SK-N-SH (cell line): ENCODE measurements at regions of chr5 and their contacts with region 1.

Region 1: DNA sequence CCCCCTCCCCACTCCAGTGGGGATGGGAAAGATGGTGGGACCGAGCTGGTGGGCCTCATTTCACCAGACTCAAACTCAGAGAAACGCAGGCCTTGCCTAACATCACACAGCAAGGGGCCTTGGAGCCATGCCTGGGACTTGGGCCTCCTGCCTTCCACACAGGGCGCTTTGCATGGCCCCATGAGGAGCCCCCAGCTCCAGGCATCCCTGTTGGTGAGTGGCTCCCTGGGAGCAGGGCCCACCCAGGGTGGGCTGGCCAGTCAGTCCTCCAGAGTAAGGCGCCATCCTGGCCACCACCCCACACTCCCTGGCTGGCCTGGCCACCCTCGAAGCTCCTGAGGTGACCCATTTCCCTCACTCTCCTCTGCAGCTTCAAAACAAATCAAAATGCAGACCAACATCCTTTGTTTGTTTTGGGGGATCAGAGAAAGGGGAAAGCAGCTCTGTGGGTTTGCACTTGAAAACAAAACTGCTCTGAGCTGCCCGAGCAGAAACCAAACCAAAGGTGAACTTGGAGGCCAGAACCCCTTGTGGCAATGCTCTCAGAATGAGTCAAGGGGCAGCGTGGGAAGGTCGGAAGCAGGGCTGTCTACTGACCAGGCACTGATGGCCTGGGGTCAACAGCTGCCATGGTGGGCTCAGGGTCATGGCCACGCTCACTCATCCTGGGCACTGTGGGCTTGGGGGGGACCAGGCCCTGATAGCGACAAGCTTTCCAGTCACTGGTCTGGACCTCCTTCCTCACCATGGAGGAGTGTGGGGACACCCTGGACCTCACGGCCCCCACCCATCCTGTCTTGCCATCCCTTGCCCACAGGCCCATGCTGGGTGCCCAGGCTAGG is 37.0 kb upstream of the VDAC1 start:
- DNase-seq: no peak
- H3K4me3 ChIP-seq: no peak overlapping the region
- H3K27ac ChIP-seq: no peak overlapping the region
- H3K4me1 ChIP-seq: peaks cover 0 to 3% of the 10 kb centered on the region in 2 experiments; a peak in 1 of 4 replicates
- H3K27me3 ChIP-seq: no peaks in the 10 kb centered on the region
- CTCF ChIP-seq: no peak
- EP300 ChIP-seq: no peak
- RAD21 ChIP-seq: no peak

Region 2: GRCh38 chr5:134026521-134027268 is 15.1 kb before region 1 on chr5:
- CTCF ChIA-PET with region 1: interaction called, 43 read pairs
- POLR2A ChIA-PET with region 1: no interaction called
- DNase-seq: peak; percentile 80
- H3K4me3 ChIP-seq: no peak overlapping the region
- H3K27ac ChIP-seq: no peak overlapping the region
- H3K4me1 ChIP-seq: no peaks in the 10 kb centered on the region
- H3K27me3 ChIP-seq: no peaks in the 10 kb centered on the region
- CTCF ChIP-seq: peak; percentile 58
- EP300 ChIP-seq: no peak
- RAD21 ChIP-seq: peak; percentile 64

Region 3: DNA sequence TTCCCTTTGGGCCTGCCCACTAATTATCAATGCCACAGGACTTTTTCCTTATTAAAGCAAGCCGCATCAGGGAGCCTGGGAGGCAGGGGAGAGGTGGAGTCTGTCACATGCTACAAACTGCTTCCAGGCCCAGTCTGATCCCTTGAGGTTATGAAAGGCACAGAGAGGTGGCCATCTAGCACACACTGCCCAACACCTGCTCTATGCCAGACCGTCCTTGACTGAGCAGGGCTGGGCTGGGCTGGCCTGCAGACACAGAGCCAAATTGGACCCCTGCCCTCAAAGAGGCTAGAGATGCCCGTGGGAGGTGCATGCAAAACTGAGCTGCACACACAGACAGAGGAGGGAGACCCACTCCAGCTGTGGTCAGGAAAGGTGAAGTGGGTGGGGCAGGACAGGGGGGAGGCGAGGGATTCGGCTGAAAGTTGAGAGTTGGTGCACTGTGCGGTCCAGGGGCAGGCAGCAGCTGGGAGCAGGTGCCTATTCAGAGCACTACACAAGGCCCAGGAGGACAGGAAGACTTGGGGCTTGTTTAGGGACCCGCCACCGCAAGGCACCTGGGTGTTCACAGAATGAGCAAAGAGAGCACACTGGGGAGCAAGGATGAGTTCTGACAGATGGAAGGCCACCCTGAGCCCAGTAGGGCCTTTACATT is 36.3 kb after region 1 on chr5:
- CTCF ChIA-PET with region 1: interaction called, 25 read pairs
- POLR2A ChIA-PET with region 1: no interaction called
- DNase-seq: no peak
- H3K4me3 ChIP-seq: no peak overlapping the region
- H3K27ac ChIP-seq: no peak overlapping the region
- H3K4me1 ChIP-seq: peaks cover 0 to 4% of the 10 kb centered on the region in 2 experiments; a peak in 1 of 4 replicates
- H3K27me3 ChIP-seq: no peaks in the 10 kb centered on the region
- CTCF ChIP-seq: no peak
- EP300 ChIP-seq: no peak
- RAD21 ChIP-seq: no peak

Region 4: DNA sequence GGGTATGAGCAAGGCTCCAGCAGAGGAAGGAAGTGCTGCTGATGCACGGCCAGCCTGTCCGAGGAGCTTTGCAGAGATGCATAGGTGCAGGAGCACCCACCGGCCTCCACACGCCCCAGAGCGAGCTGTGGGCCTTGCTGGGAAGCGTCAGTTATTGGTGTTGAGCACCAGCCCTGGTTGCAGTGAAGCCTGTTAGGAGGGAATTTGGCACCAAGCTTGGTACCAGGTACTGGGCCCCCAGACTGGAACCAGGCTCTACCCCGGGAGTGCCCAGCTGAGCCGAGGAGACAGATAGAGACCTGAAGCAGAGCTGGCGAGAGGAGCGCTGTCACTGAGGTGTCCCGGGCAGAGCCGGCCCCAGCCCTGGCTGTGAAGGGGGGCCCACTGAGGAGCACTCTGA is 77.9 kb after region 1 on chr5:
- CTCF ChIA-PET with region 1: interaction called, 124 read pairs
- POLR2A ChIA-PET with region 1: interaction called, 4 read pairs
- DNase-seq: no peak
- H3K4me3 ChIP-seq: no peak overlapping the region
- H3K27ac ChIP-seq: no peak overlapping the region; a peak in 1 of 4 replicates
- H3K4me1 ChIP-seq: peaks cover 2 to 55% of the 10 kb centered on the region in 2 experiments; a peak in 3 of 4 replicates
- H3K27me3 ChIP-seq: no peaks in the 10 kb centered on the region
- CTCF ChIP-seq: no peak
- EP300 ChIP-seq: no peak
- RAD21 ChIP-seq: no peak

Region 5: DNA sequence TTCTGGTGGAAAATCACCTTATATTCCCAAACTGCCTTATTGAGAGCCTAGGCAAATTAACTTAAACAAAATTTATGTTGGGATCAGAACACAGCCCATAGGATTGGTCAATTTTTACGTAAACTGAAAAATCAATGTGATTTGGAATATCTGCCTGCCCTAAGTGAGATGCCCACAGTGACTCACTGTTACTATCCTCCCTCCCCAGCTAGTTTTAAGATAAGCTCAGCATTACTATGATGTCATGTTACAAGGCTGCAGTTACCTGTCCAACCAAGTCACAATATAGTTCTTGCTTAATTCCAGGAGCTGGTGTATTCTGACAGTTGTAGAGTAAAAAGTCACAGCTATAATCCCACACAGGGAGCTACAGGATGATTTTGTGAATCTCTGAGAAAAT is 111.9 kb after region 1 on chr5:
- CTCF ChIA-PET with region 1: interaction called, 673 read pairs
- POLR2A ChIA-PET with region 1: no interaction called
- DNase-seq: no peak
- H3K4me3 ChIP-seq: no peak overlapping the region
- H3K27ac ChIP-seq: no peak overlapping the region
- H3K4me1 ChIP-seq: no peaks in the 10 kb centered on the region; a peak in 1 of 4 replicates
- H3K27me3 ChIP-seq: no peaks in the 10 kb centered on the region
- CTCF ChIP-seq: no peak
- EP300 ChIP-seq: no peak
- RAD21 ChIP-seq: no peak

Region 6: GRCh38 chr5:134289509-134290113 is 247.8 kb after region 1 on chr5:
- CTCF ChIA-PET with region 1: interaction called, 39 read pairs
- POLR2A ChIA-PET with region 1: no interaction called
- DNase-seq: peak; percentile 69
- H3K4me3 ChIP-seq: no peak overlapping the region; a peak in 1 of 4 replicates
- H3K27ac ChIP-seq: no peak overlapping the region
- H3K4me1 ChIP-seq: no peaks in the 10 kb centered on the region
- H3K27me3 ChIP-seq: no peaks in the 10 kb centered on the region
- CTCF ChIP-seq: peak; percentile 83
- EP300 ChIP-seq: no peak
- RAD21 ChIP-seq: peak; percentile 98